ENCODE measurements at regions of chr3 and their contacts with region 1.

Region 1: DNA sequence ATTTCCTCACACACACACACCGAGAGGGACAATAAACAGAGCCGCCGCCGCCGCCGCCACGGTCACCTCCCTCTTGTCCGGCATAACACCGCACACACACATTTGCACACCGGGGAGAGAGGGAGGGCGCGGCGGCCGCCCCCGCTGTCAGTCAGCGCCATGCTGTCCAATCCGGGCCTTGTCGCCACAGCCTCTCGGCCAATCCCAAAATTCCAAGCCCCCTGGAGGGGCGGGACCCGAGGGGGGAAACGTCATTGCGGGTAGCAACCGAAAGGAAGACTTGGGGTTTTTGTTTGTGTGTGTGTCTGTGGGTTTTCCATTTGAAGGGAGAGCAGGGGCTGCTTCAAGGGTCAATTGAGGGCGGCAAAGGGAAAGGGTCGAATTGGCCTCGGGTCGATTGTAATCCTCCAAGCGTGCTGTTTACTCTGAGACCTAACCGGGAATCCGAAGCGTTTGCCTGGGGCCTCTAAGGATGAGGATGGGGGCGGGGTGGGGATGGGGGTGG is at the start of gene TOP2B:
- DNase-seq: peak; percentile 95
- H3K4me3 Mint-ChIP-seq: peak within 1 kb of the TSS; percentile 95
- H3K27ac Mint-ChIP-seq: peak within 1 kb of the TSS; percentile 97
- H3K4me1 Mint-ChIP-seq: peaks cover 36% of the 10 kb centered on the region
- H3K27me3 Mint-ChIP-seq: peaks cover 2% of the 10 kb centered on the region
- total RNA-seq, gene TOP2B: 133 and 135 TPM in 2 replicates

Region 2: DNA sequence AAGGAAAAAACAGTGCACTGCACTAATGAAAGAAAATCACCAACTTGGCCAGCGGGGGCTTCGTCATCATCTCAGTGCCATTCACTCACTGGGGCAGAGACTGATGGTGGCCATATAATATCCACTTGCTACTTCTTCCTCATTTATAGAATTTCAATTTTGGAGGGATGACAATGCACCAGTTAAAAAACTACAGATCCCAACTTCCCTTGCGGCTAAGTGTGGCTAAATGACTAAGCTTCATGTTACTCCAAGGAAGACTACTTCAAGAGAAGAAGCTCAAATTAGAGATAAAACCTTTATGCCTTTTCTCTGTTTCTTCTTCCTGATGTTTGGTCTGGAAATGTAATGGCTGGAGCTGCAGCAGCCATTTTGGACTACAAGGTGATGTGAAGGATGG is 79.6 kb after region 1 on chr3:
- intact Hi-C with region 1: loop called (anchors 5 kb)
- DNase-seq: no peak
- H3K4me3 Mint-ChIP-seq: no peak overlapping the region
- H3K27ac Mint-ChIP-seq: no peak overlapping the region
- H3K4me1 Mint-ChIP-seq: peaks cover 5% of the 10 kb centered on the region
- H3K27me3 Mint-ChIP-seq: no peaks in the 10 kb centered on the region

Region 3: DNA sequence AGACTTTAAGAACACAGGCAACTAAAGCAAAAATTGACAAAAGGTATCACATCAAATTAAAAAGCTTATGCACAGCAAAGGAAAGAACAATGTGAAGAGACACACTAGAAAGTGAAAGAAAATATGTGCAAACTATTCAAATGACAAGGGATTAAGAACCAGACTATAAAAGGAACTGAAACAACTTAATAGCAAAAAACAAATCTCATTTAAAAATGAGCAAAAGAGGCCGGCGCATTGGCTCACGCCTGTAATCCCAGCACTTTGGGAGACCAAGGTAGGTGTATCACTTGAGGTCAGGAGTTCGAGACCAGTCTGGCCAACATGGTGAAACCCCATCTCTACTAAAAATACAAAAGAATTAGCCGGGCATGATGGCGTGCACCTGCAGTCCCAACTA is 104.0 kb after region 1 on chr3:
- intact Hi-C with region 1: no loop called
- DNase-seq: no peak
- H3K4me3 Mint-ChIP-seq: no peak overlapping the region
- H3K27ac Mint-ChIP-seq: no peak overlapping the region
- H3K4me1 Mint-ChIP-seq: peaks cover 9% of the 10 kb centered on the region
- H3K27me3 Mint-ChIP-seq: no peaks in the 10 kb centered on the region

Region 4: GRCh38 chr3:25782938-25783660 is 118.2 kb after region 1 on chr3 and contains the start of gene NGLY1:
- intact Hi-C with region 1: loop called (anchors 1 kb)
- DNase-seq: peak; percentile 84
- H3K4me3 Mint-ChIP-seq: peak within 1 kb of the TSS; percentile 86
- H3K27ac Mint-ChIP-seq: peak within 1 kb of the TSS; percentile 82
- H3K4me1 Mint-ChIP-seq: peaks cover 59% of the 10 kb centered on the region
- H3K27me3 Mint-ChIP-seq: no peaks in the 10 kb centered on the region
- total RNA-seq, gene NGLY1: 57.9 and 59.2 TPM in 2 replicates